PC-9 (cell line): ENCODE measurements at regions of chr7 and their contacts with region 1.

Region 1: GRCh38 chr7:3042861-3043489 is 692 bp downstream of the CARD11 start:
- DNase-seq: peak; percentile 68 to 71
- H3K4me3 ChIP-seq: peak overlapping the region; percentile 91
- H3K27ac ChIP-seq: peak overlapping the region; percentile 56
- H3K4me1 ChIP-seq: peaks cover 15% of the 10 kb centered on the region
- H3K27me3 ChIP-seq: no peaks in the 10 kb centered on the region
- CTCF ChIP-seq: no peak

Region 2: GRCh38 chr7:2894118-2894940 is 148.6 kb before region 1 on chr7:
- CTCF ChIA-PET with region 1: no interaction called
- POLR2A ChIA-PET with region 1: no interaction called
- intact Hi-C with region 1: loop called (anchors 5 kb)
- DNase-seq: no peak
- H3K4me3 ChIP-seq: no peak overlapping the region
- H3K27ac ChIP-seq: no peak overlapping the region
- H3K4me1 ChIP-seq: no peaks in the 10 kb centered on the region
- H3K27me3 ChIP-seq: no peaks in the 10 kb centered on the region
- CTCF ChIP-seq: no peak

Region 3: GRCh38 chr7:2993868-2994267 is 49.1 kb before region 1 on chr7:
- CTCF ChIA-PET with region 1: interaction called, 32 read pairs
- POLR2A ChIA-PET with region 1: no interaction called
- intact Hi-C with region 1: no loop called
- DNase-seq: no peak
- H3K4me3 ChIP-seq: no peak overlapping the region
- H3K27ac ChIP-seq: no peak overlapping the region
- H3K4me1 ChIP-seq: no peaks in the 10 kb centered on the region
- H3K27me3 ChIP-seq: no peaks in the 10 kb centered on the region
- CTCF ChIP-seq: no peak

Region 4: GRCh38 chr7:3082831-3083230 is 39.9 kb after region 1 on chr7:
- CTCF ChIA-PET with region 1: no interaction called
- POLR2A ChIA-PET with region 1: interaction called, 28 read pairs
- intact Hi-C with region 1: no loop called
- DNase-seq: no peak
- H3K4me3 ChIP-seq: no peak overlapping the region
- H3K27ac ChIP-seq: no peak overlapping the region
- H3K4me1 ChIP-seq: no peaks in the 10 kb centered on the region
- H3K27me3 ChIP-seq: no peaks in the 10 kb centered on the region
- CTCF ChIP-seq: no peak